ENCODE measurements at regions of chr11 and their contacts with region 1.

Region 1: DNA sequence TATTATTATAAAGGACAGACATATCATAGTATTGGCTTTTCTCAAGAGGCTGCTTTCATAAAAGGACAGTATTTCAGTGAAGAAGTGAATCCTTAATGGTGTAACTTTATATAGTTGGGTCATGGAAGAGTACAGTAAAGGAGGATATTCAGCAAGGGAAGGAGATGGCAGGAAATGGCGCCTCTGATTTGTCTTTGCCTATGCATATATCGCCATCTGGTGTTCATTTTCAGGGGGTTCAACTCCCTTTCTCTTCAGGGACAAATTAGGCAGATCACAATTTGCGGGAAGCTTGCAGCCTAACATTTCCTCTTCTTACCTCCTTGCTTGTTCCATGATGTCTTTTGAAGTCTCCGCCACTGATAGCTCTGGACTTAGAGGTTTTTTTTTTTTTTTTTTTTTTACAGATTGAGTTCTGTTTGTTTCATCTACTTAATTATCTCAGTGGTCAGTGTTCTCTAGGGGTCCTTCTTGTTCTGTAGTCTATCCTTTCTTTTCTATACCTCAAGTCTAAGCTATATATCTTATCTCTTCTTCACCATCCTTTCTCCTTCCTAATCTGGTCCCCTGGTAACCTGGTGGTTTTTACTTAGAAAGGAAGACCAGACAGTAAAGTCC is 21.8 kb upstream of the RRM1 start:
- DNase-seq: peak in 7 of 9 donors; percentile 58 to 80 (median 75)
- ATAC-seq: peak; percentile 90
- H3K4me3 ChIP-seq: no peak overlapping the region
- H3K4me3 Mint-ChIP-seq: no peak overlapping the region
- H3K27ac ChIP-seq: peak overlapping the region; percentile 55
- H3K27ac Mint-ChIP-seq: peak overlapping the region; percentile 7 to 92 (median 85)
- H3K4me1 ChIP-seq: peaks cover 8 to 25% of the 10 kb centered on the region in 2 donors
- H3K4me1 Mint-ChIP-seq: peaks cover 32 to 78% (median 74%) of the 10 kb centered on the region in 7 donors
- H3K27me3 ChIP-seq: no peaks in the 10 kb centered on the region
- H3K27me3 Mint-ChIP-seq: no peaks in the 10 kb centered on the region

Region 2: DNA sequence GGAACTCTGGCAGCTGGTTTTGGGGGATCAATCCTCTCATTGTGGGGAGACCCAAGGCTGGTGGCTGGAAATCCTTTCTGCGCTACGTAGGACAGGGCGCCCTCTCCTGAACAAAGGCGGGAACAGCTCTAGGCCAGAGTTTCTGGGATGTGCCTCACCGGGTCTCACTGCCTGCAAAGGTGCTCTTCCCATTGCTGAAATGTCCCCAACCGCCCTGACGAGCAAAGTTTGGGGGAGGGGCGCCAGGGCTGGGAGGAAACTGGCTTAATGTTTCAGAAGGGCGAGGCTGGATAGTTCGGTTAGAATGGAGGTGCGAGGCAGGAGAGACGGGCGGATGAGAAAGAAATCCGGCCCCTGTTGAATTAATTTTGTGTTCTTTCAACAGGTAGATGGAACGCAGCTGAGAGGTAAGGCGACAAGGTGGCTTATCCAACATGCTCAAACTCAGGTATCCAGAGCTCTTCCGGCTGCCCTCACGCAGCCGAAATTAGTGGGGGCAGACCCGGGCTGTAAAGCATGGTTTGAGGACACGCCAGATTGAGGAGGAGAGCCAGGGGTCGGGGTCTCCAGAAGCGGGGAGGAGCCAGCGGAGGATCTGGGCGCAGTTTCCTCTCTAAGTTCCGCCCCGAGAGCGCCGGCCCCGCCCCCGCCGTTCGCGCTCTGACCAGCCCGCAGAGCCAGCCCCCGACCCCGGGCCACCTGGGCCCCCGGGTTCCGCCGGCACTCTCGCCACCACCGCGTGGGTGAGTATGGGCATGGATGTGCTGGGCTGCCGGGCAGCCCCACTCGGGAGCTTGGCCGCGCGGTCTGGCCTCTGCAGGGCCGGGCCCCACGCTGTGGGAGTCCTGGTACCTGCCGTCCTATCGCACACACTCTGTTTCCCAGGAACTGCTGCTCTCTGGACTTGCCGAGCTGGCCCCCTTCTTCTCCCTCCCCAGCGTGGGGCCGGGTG is 264.6 kb before region 1 on chr11 and contains the start of gene PGAP2:
- CTCF ChIA-PET with region 1: interaction called, 11 read pairs
- POLR2A ChIA-PET with region 1: interaction called, 4 read pairs
- intact Hi-C with region 1: loop called in 1 of 2 experiments (anchors 1 kb)
- DNase-seq: peak; percentile 37 to 75 (median 52)
- ATAC-seq: peak; percentile 83
- H3K4me3 ChIP-seq: peak within 1 kb of the TSS; percentile 66
- H3K4me3 Mint-ChIP-seq: peak within 1 kb of the TSS; percentile 90 to 99 (median 96)
- H3K27ac ChIP-seq: peak within 1 kb of the TSS; percentile 78
- H3K27ac Mint-ChIP-seq: peak within 1 kb of the TSS; percentile 77 to 97 (median 93)
- H3K4me1 ChIP-seq: peaks cover 3 to 12% of the 10 kb centered on the region in 2 donors
- H3K4me1 Mint-ChIP-seq: peaks cover 12 to 27% (median 18%) of the 10 kb centered on the region in 7 donors
- H3K27me3 ChIP-seq: no peaks in the 10 kb centered on the region
- H3K27me3 Mint-ChIP-seq: no peaks in the 10 kb centered on the region
- total RNA-seq, gene PGAP2: 20.8 to 28.3 (median 26.1) TPM

Region 3: GRCh38 chr11:3849297-3849874 is 223.4 kb before region 1 on chr11:
- CTCF ChIA-PET with region 1: interaction called, 164 read pairs
- POLR2A ChIA-PET with region 1: interaction called, 110 read pairs
- intact Hi-C with region 1: loop called (anchors 1 kb)
- DNase-seq: peak in 7 of 9 donors; percentile 45 to 72 (median 62)
- ATAC-seq: peak; percentile 82
- H3K4me3 ChIP-seq: no peak overlapping the region
- H3K4me3 Mint-ChIP-seq: no peak overlapping the region
- H3K27ac ChIP-seq: no peak overlapping the region
- H3K27ac Mint-ChIP-seq: peak overlapping the region in 8 of 9 donors; percentile 7 to 80 (median 62)
- H3K4me1 ChIP-seq: peaks cover 20 to 33% of the 10 kb centered on the region in 2 donors
- H3K4me1 Mint-ChIP-seq: peaks cover 28 to 61% (median 42%) of the 10 kb centered on the region in 7 donors
- H3K27me3 ChIP-seq: no peaks in the 10 kb centered on the region
- H3K27me3 Mint-ChIP-seq: no peaks in the 10 kb centered on the region

Region 4: DNA sequence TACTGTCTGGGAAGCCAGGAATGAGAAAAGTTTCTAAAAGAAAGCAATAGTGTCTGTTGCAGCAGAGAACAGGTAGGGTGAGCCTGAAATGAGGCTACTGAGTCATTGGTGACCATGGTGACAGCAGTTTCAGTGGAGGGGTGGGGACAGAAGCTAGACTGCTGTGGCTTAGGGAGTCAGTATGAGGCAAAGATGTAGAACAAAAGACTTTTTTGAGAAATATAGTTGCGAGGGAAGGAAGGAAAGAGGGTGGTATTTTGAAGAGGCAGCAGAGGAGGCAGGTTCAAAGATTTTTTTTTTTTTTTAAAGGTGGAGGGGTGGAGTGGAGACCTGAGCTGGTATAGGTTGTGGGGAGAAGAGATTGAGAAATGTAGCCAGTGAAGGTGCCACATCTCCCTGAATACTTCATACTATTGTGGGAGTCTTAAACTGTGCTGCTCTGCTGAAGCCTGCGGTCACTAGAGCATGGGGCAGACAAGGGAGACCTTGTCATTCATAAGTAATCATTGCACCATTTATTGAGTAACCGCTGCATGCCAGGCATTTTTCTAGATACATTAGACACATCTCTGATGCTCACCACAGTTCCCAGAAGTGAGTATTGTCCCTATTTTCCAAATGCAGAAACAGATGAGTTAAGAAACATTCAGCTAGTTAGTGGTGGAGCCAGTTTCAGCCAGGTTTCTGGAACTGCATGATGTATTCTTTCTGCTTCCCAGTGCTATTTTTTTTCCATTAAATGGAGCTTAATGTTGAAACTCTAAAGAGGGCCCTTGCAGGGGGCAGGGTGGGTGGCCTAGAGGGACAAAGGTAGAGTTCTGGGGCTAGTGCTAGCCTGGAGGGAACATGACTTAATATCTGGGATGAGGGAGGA is 167.5 kb before region 1 on chr11:
- CTCF ChIA-PET with region 1: interaction called, 5 read pairs
- POLR2A ChIA-PET with region 1: no interaction called
- intact Hi-C with region 1: loop called in 1 of 2 experiments (anchors 5 kb)
- DNase-seq: peak in 8 of 9 donors; percentile 45 to 80 (median 72)
- ATAC-seq: peak; percentile 92
- H3K4me3 ChIP-seq: no peak overlapping the region
- H3K4me3 Mint-ChIP-seq: peak overlapping the region; percentile 9 to 72 (median 54)
- H3K27ac ChIP-seq: peak overlapping the region; percentile 59
- H3K27ac Mint-ChIP-seq: peak overlapping the region; percentile 64 to 91 (median 81)
- H3K4me1 ChIP-seq: peaks cover 41 to 57% of the 10 kb centered on the region in 2 donors
- H3K4me1 Mint-ChIP-seq: peaks cover 66 to 93% (median 84%) of the 10 kb centered on the region in 7 donors
- H3K27me3 ChIP-seq: no peaks in the 10 kb centered on the region
- H3K27me3 Mint-ChIP-seq: no peaks in the 10 kb centered on the region

Region 5: DNA sequence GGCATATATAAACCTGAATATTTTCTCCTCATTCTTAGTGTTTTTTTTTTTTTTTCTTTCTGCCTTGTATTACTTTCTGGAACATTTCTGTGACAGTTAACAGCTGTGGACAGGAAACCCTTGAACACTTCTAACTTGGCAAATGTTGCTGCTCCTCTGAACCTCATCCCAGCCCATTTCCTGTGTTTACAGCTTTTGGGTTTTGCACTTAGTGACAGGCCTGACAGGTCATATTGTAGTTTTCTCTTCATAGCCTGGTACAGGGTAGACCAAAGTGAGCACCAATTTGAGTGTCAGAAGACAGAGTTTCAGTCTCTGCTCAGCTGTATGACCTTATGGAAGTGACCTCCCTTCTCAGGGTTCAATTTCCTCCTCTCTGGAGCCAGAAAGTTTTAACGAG is 125.7 kb before region 1 on chr11:
- CTCF ChIA-PET with region 1: interaction called, 24 read pairs
- POLR2A ChIA-PET with region 1: interaction called, 5 read pairs
- intact Hi-C with region 1: loop called (anchors 1 kb)
- DNase-seq: peak in 8 of 9 donors; percentile 36 to 86 (median 80)
- ATAC-seq: peak; percentile 88
- H3K4me3 ChIP-seq: peak overlapping the region; percentile 44
- H3K4me3 Mint-ChIP-seq: peak overlapping the region; percentile 52 to 88 (median 80)
- H3K27ac ChIP-seq: peak overlapping the region; percentile 65
- H3K27ac Mint-ChIP-seq: peak overlapping the region; percentile 93 to 99 (median 97)
- H3K4me1 ChIP-seq: peaks cover 93 to 95% of the 10 kb centered on the region in 2 donors
- H3K4me1 Mint-ChIP-seq: peaks cover 84 to 98% (median 97%) of the 10 kb centered on the region in 7 donors
- H3K27me3 ChIP-seq: no peaks in the 10 kb centered on the region
- H3K27me3 Mint-ChIP-seq: no peaks in the 10 kb centered on the region

Region 6: DNA sequence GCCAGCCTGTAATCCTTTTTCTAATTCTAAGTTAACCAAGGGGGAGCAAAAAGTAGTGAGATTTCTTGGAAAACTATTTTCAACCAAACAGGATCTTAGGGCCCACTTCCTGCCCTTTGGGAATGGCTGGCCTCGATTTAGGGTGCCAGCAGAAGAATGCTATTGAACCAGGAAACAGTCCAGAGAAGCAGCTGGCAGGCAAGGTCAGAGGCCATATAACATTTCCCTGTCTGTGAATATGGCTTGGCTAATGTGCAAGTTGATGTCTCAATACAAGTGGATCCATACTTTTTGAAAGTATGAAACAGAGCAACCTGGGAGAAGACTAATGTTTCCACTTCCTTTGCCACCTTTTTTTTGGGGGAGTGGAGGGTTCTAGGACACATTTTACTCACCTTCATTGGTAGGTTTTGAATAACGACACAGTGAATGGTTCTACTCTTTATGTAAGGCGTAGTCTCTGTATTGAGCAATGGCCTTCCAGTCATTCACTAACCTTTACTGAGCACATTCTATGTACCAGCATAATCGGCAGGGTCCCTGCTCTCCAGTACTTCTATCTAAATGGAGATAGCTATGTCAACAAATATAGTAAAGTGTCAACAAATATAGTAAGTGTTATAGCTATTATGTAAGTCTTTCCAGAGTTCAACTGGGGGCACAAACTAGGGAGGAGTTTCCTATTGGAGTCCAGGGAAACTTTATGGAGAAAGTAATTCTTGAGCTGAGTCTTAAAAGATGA is 12.4 kb before region 1 on chr11:
- CTCF ChIA-PET with region 1: interaction called, 14 read pairs
- POLR2A ChIA-PET with region 1: interaction called, 4 read pairs
- intact Hi-C with region 1: no loop called
- DNase-seq: no peak
- ATAC-seq: no peak
- H3K4me3 ChIP-seq: no peak overlapping the region
- H3K4me3 Mint-ChIP-seq: no peak overlapping the region
- H3K27ac ChIP-seq: no peak overlapping the region
- H3K27ac Mint-ChIP-seq: peak overlapping the region in 8 of 9 donors; percentile 32 to 88 (median 54)
- H3K4me1 ChIP-seq: peaks cover 3 to 16% of the 10 kb centered on the region in 2 donors
- H3K4me1 Mint-ChIP-seq: peaks cover 17 to 48% (median 46%) of the 10 kb centered on the region in 7 donors
- H3K27me3 ChIP-seq: no peaks in the 10 kb centered on the region
- H3K27me3 Mint-ChIP-seq: no peaks in the 10 kb centered on the region